Activated CD8-positive, alpha-beta T cell treated with anti-CD3 and anti-CD28 coated beads for 36 hours (primary cell): ENCODE measurements at regions of chr12 and their contacts with region 1.

Region 1: DNA sequence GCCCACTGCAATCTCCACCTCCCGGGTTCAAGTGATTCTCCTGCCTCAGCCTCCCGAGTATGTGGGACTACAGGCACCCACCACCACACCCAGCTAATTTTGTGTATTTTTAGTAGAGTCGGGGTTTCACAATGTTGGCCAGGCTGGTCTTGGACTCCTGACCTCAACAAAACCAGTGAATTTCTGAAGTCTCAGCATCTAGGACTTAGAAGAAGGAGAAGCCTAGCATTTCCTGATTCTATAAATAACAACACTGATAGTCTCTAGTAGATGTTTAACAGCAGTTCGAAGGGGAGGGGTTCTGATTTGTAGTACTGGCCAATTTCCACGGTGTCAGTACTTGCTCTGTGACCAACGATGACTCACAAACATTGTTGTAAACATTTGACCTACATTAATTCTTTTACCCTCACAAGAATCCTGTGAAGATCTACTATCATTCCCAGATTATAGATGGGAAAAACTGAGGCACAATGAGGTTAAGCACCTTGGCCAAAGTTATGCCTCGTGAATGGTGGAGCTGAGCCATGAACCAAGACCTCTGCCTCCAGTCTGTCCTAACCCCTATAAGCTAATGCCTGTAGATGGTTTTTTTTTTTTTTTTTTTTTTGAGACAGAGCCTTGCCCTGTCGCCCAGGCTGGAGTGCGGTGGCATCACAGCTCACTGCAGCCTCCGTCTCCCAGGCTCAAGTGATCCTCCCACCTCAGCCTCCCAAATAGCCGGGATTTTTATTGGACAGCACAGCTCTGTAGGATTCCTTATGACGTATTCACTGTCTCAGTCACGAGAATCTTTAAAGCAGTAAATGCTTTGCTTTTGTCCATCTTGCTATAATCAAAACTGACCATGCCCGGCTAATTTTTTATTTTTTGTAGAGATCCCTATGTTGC is 5.2 kb downstream of the P2RX4 start:
- DNase-seq: no peak
- ATAC-seq: peak; percentile 22
- H3K4me3 Mint-ChIP-seq: no peak overlapping the region
- H3K27ac Mint-ChIP-seq: peak overlapping the region; percentile 74
- H3K4me1 Mint-ChIP-seq: peaks cover 37% of the 10 kb centered on the region
- H3K27me3 Mint-ChIP-seq: no peaks in the 10 kb centered on the region
- CTCF ChIP-seq: no peak

Region 2: DNA sequence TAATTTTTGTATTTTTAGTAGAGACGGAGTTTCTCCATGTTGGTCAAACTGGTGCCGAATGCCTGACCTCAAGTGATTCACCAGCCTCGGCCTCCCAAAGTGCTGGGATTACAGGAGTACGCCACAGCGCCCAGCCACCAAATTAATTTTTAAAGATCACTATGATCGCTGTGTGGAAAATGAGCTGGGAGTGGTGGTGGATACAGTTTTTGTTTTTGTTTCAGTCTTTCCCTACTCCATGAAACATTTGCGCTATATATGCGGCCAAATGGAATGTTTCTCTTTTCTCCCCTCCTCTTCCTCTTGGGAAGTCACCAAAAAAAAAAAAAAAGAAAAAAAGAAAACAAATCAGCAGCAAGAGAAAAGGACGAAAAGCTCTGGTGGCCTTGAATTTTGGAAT is 26.0 kb before region 1 on chr12:
- CTCF ChIA-PET with region 1: no interaction called
- POLR2A ChIA-PET with region 1: no interaction called
- intact Hi-C with region 1: no loop called
- DNase-seq: no peak
- ATAC-seq: no peak
- H3K4me3 Mint-ChIP-seq: no peak overlapping the region
- H3K27ac Mint-ChIP-seq: no peak overlapping the region
- H3K4me1 Mint-ChIP-seq: peaks cover 3% of the 10 kb centered on the region
- H3K27me3 Mint-ChIP-seq: no peaks in the 10 kb centered on the region
- CTCF ChIP-seq: no peak

Region 3: GRCh38 chr12:121232977-121233627 is 18.0 kb after region 1 on chr12:
- CTCF ChIA-PET with region 1: interaction called, 17 read pairs
- POLR2A ChIA-PET with region 1: interaction called, 5 read pairs
- intact Hi-C with region 1: no loop called
- DNase-seq: no peak
- ATAC-seq: no peak
- H3K4me3 Mint-ChIP-seq: no peak overlapping the region
- H3K27ac Mint-ChIP-seq: no peak overlapping the region
- H3K4me1 Mint-ChIP-seq: peaks cover 10% of the 10 kb centered on the region
- H3K27me3 Mint-ChIP-seq: no peaks in the 10 kb centered on the region
- CTCF ChIP-seq: no peak

Region 4: GRCh38 chr12:121657305-121658008 is 442.4 kb after region 1 on chr12:
- CTCF ChIA-PET with region 1: no interaction called
- POLR2A ChIA-PET with region 1: no interaction called
- intact Hi-C with region 1: no loop called
- DNase-seq: peak; percentile 36
- ATAC-seq: peak; percentile 22
- H3K4me3 Mint-ChIP-seq: no peak overlapping the region
- H3K27ac Mint-ChIP-seq: peak overlapping the region; percentile 50
- H3K4me1 Mint-ChIP-seq: peaks cover 53% of the 10 kb centered on the region
- H3K27me3 Mint-ChIP-seq: no peaks in the 10 kb centered on the region
- CTCF ChIP-seq: no peak